ENCODE measurements at regions of chr1 and their contacts with region 1.

Region 1: GRCh38 chr1:27568300-27569087 is 35.5 kb downstream of the AHDC1 start:
- DNase-seq: peak; percentile 99
- H3K4me3 Mint-ChIP-seq: peak overlapping the region; percentile 76
- H3K27ac Mint-ChIP-seq: peak overlapping the region; percentile 43
- H3K4me1 Mint-ChIP-seq: peaks cover 25% of the 10 kb centered on the region
- H3K27me3 Mint-ChIP-seq: no peaks in the 10 kb centered on the region

Region 2: GRCh38 chr1:27556781-27557595 is 11.5 kb before region 1 on chr1:
- intact Hi-C with region 1: loop called (anchors 1 kb)
- DNase-seq: peak; percentile 92
- H3K4me3 Mint-ChIP-seq: peak overlapping the region; percentile 59
- H3K27ac Mint-ChIP-seq: peak overlapping the region; percentile 81
- H3K4me1 Mint-ChIP-seq: peaks cover 47% of the 10 kb centered on the region
- H3K27me3 Mint-ChIP-seq: no peaks in the 10 kb centered on the region

Region 3: DNA sequence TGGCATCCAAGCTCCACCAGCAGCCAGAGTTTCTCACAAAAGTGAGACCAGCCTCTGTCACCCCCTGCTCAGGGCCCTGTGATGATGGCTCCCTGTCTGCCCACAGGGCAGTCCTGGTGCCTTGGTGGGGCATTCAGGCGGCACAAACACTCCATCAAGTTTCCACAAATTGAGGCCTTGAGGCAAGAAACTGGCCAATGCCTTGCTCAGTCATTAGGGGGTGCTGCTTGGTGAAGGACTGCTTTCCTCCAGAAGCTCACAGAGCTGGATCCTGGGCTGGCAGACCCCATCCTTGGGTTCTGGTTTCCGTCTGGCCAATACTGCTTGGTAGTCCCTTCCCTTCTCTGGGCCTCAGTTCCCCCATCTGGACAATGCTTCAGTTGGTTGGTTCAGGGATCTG is 47.9 kb after region 1 on chr1:
- intact Hi-C with region 1: no loop called
- DNase-seq: no peak
- H3K4me3 Mint-ChIP-seq: no peak overlapping the region
- H3K27ac Mint-ChIP-seq: no peak overlapping the region
- H3K4me1 Mint-ChIP-seq: peaks cover 41% of the 10 kb centered on the region
- H3K27me3 Mint-ChIP-seq: no peaks in the 10 kb centered on the region